ENCODE measurements at regions of chr17 and their contacts with region 1.

Region 1: GRCh38 chr17:75978938-75979704 is at the starts of genes ACOX1 and TEN1:
- DNase-seq: peak; percentile 96 to 99 (median 97)

Region 2: DNA sequence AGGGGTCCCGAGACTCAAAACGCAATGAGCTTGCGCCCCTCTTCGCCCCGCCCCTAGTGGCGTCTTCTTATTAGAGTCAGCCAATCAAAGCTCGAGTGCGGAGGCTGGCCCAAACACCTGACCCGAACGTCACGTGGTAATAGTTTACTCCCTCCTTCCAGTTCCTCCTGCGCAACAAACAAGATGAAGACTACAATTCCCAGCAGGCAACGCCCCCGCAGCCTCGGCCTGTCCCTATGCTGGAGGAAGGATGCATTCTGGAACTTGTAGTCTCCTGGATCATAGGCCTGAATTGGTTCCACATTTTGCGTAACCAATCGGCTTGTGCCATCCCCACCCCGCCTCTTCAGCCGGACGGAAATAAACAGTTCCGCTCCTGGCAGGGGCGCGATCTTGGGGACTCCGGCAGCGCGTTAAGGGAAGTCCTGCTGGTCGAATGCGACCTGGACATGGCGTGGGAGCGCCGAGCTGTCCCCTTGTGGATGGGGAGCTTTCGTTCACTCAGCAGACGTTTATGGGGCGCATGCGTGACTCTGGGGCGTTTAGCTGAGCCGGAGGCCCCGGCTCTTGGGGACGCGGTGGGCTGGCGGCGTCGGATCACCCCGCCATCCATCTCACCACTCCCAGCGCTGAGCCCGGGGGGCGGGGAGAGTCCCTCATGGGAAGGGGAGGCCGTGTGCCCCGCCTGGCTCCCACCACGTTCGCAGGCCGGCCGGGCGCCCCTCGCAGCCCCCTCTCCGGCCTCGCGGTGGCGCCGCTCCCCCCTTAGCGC is 123.6 kb before region 1 on chr17 and contains the start of gene WBP2:
- intact Hi-C with region 1: no loop called
- DNase-seq: peak; percentile 96 to 100 (median 98)

Region 3: GRCh38 chr17:75940724-75941441 is 38.2 kb before region 1 on chr17 and contains the start of gene FBF1:
- intact Hi-C with region 1: loop called (anchors 1 kb)
- DNase-seq: peak; percentile 93 to 100 (median 98)

Region 4: GRCh38 chr17:76005263-76006149 is 26.4 kb after region 1 on chr17:
- intact Hi-C with region 1: loop called (anchors 2 kb)
- DNase-seq: peak in 8 of 10 donors; percentile 52 to 87 (median 83)